ENCODE measurements at regions of chr17 and their contacts with region 1.

Region 1: GRCh38 chr17:48084932-48085444 is 16.3 kb downstream of the CBX1 start:
- DNase-seq: no peak
- ATAC-seq: no peak
- H3K4me3 Mint-ChIP-seq: no peak overlapping the region
- H3K27ac Mint-ChIP-seq: no peak overlapping the region
- H3K4me1 Mint-ChIP-seq: peaks cover 7% of the 10 kb centered on the region
- H3K27me3 Mint-ChIP-seq: no peaks in the 10 kb centered on the region

Region 2: DNA sequence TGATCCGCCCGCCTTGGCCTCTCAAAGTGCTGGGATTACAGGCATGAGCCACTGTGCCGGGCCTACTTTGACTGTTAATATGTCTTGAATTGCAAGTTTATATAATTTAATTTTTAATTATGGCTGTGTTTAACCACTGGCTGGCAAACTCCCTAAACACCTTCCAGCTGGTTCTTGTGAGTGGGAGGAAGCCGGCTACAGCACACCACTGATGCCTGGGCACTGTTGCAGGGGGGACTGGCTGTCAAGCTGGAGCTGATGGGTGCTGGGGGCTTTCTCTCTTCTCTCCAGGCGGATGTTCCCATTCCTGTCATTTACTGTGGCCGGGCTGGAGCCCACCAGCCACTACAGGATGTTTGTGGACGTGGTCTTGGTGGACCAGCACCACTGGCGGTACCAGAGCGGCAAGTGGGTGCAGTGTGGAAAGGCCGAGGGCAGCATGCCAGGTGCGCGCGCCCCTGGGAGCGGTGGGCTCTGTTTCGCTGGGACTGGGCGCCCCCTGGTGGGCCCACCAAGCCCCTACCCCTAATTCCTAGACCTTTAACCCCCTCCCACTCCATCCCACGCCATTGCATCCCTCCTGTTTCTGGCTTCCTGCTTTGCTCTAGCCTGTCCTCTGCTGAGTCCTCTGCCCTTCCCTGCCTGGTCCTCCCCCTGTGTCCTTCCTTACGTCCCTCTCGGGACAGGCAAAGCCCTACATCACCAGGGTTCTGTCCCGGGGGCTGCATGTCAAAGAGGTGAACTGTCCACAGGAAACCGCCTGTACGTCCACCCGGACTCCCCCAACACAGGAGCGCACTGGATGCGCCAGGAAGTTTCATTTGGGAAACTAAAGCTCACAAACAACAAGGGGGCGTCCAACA is 342.4 kb before region 1 on chr17:
- CTCF ChIA-PET with region 1: no interaction called
- POLR2A ChIA-PET with region 1: no interaction called
- intact Hi-C with region 1: no loop called
- DNase-seq: peak; percentile 67
- ATAC-seq: no peak
- H3K4me3 Mint-ChIP-seq: no peak overlapping the region
- H3K27ac Mint-ChIP-seq: peak overlapping the region; percentile 13
- H3K4me1 Mint-ChIP-seq: peaks cover 44% of the 10 kb centered on the region
- H3K27me3 Mint-ChIP-seq: no peaks in the 10 kb centered on the region

Region 3: GRCh38 chr17:48074315-48075081 is 10.5 kb before region 1 on chr17:
- CTCF ChIA-PET with region 1: interaction called, 33 read pairs
- POLR2A ChIA-PET with region 1: no interaction called
- intact Hi-C with region 1: no loop called
- DNase-seq: peak; percentile 86
- ATAC-seq: peak; percentile 75
- H3K4me3 Mint-ChIP-seq: no peak overlapping the region
- H3K27ac Mint-ChIP-seq: no peak overlapping the region
- H3K4me1 Mint-ChIP-seq: no peaks in the 10 kb centered on the region
- H3K27me3 Mint-ChIP-seq: no peaks in the 10 kb centered on the region

Region 4: GRCh38 chr17:48107168-48108132 is 22.5 kb after region 1 on chr17 and contains the start of gene SNX11:
- CTCF ChIA-PET with region 1: interaction called, 16 read pairs
- POLR2A ChIA-PET with region 1: no interaction called
- intact Hi-C with region 1: no loop called
- DNase-seq: peak; percentile 97
- ATAC-seq: peak; percentile 87
- H3K4me3 Mint-ChIP-seq: peak within 1 kb of the TSS; percentile 97
- H3K27ac Mint-ChIP-seq: peak within 1 kb of the TSS; percentile 98
- H3K4me1 Mint-ChIP-seq: peaks cover 61% of the 10 kb centered on the region
- H3K27me3 Mint-ChIP-seq: no peaks in the 10 kb centered on the region
- total RNA-seq, gene SNX11: 18.0 to 21.4 TPM

Region 5: DNA sequence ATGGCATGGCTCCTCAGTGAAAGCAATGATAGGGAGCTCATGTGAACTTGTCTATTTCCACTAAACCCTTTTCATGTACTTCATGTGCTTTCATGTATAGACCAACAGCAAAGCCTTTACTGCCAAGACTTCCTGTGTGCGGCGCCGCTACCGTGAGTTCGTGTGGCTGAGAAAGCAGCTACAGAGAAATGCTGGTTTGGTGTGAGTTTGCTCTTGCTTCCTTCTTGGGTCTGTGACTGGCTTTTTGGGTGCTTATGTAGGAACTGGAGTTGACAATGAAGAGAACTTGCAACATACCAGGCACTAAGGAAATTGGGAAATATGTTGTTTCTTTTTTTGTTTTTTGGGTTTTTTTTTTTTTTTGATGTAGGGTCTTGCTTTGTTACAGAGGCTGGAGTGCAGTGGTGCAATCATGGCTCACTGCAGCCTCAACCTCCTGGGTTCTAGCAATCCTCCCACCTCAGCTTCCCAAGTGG is 28.3 kb after region 1 on chr17:
- CTCF ChIA-PET with region 1: interaction called, 16 read pairs
- POLR2A ChIA-PET with region 1: no interaction called
- intact Hi-C with region 1: no loop called
- DNase-seq: peak; percentile 69
- ATAC-seq: peak; percentile 69
- H3K4me3 Mint-ChIP-seq: peak overlapping the region; percentile 50
- H3K27ac Mint-ChIP-seq: peak overlapping the region; percentile 79
- H3K4me1 Mint-ChIP-seq: peaks cover 45% of the 10 kb centered on the region
- H3K27me3 Mint-ChIP-seq: no peaks in the 10 kb centered on the region

Region 6: GRCh38 chr17:48123111-48123510 is 38.1 kb after region 1 on chr17:
- CTCF ChIA-PET with region 1: interaction called, 29 read pairs
- POLR2A ChIA-PET with region 1: no interaction called
- intact Hi-C with region 1: no loop called
- DNase-seq: no peak
- ATAC-seq: no peak
- H3K4me3 Mint-ChIP-seq: no peak overlapping the region
- H3K27ac Mint-ChIP-seq: no peak overlapping the region
- H3K4me1 Mint-ChIP-seq: peaks cover 4% of the 10 kb centered on the region
- H3K27me3 Mint-ChIP-seq: no peaks in the 10 kb centered on the region

Region 7: DNA sequence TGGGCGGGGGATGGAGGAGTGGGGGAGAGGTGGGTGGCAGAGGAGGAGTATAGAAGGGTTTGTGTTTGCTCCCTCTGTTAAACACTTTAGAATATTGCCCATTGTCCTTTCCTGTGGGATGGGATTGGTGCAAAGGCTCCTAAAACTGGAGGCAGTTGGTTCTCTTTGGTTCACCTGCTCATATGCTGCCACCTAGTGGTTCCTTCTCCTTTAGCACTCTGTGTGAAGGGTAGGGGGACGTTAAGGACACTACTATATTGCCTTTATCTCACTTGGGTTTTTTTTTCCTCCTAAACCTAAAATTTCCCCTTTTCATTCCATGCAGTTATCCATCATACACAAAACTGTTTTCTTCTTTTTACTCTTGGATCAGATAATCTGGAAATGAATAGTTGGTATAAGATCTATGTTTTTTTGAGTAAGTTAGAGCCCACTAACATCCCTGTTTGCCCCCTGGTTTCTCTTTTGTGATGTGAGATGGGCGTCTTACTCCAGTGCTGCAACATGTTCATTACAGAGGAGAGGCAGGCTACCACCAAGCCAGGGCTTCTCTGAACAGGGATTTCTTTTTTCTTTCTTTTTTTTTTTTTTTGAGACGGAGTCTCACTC is 46.3 kb after region 1 on chr17:
- CTCF ChIA-PET with region 1: interaction called, 29 read pairs
- POLR2A ChIA-PET with region 1: interaction called, 4 read pairs
- intact Hi-C with region 1: loop called (anchors 1 kb)
- DNase-seq: peak; percentile 68
- ATAC-seq: peak; percentile 85
- H3K4me3 Mint-ChIP-seq: no peak overlapping the region
- H3K27ac Mint-ChIP-seq: peak overlapping the region; percentile 2
- H3K4me1 Mint-ChIP-seq: no peaks in the 10 kb centered on the region
- H3K27me3 Mint-ChIP-seq: no peaks in the 10 kb centered on the region

Region 8: GRCh38 chr17:48139944-48140343 is 55.0 kb after region 1 on chr17:
- CTCF ChIA-PET with region 1: interaction called, 12 read pairs
- POLR2A ChIA-PET with region 1: interaction called, 3 read pairs
- intact Hi-C with region 1: no loop called
- DNase-seq: no peak
- ATAC-seq: no peak
- H3K4me3 Mint-ChIP-seq: no peak overlapping the region
- H3K27ac Mint-ChIP-seq: peak overlapping the region; percentile 79
- H3K4me1 Mint-ChIP-seq: peaks cover 11% of the 10 kb centered on the region
- H3K27me3 Mint-ChIP-seq: no peaks in the 10 kb centered on the region

Measured in activated CD4-positive, alpha-beta T cell treated with anti-CD3 and anti-CD28 coated beads for 36 hours (primary cell).